ENCODE measurements at regions of chr7 and their contacts with region 1.

Region 1: GRCh38 chr7:108146070-108146837 is 16.1 kb upstream of the LAMB4 start:
- DNase-seq: peak; percentile 62 to 70
- H3K4me3 ChIP-seq: no peak overlapping the region
- H3K27ac ChIP-seq: no peak overlapping the region
- H3K4me1 ChIP-seq: no peaks in the 10 kb centered on the region
- H3K27me3 ChIP-seq: no peaks in the 10 kb centered on the region
- CTCF ChIP-seq: peak; percentile 79 to 93 (median 90)
- POLR2A ChIP-seq: no peak

Region 2: DNA sequence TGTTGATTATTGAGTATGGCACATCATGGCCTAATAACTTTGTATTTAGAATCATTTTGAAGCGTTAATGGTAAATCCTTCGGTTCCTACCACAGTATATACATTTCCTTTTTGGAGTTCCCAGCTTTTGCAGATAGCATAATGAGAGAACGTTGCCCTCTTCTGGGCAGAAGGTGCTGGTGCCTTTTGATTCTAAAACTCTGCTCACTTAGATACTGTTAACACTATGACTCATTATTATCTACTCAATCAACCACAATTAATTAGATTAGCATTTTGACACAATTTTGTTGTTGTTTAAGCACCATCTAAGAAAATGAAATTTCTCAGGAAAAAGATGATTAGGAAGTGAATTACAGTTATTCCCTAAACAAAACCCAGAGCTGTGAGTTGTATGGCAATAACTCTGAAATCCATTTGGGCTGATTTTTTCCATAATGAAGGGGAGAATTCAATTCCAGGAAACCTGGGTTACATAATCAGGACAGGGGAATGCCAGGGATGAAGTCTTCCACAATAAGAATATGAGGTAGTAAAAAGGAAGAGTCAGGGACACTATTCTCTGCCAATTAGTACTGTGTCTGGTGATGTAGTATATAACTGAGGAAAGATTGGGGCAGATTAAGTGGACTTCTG is 266.7 kb before region 1 on chr7:
- intact Hi-C with region 1: loop called (anchors 10 kb)
- DNase-seq: peak; percentile 34 to 39
- H3K4me3 ChIP-seq: no peak overlapping the region
- H3K27ac ChIP-seq: no peak overlapping the region
- H3K4me1 ChIP-seq: no peaks in the 10 kb centered on the region
- H3K27me3 ChIP-seq: no peaks in the 10 kb centered on the region
- CTCF ChIP-seq: peak in 5 of 6 experiments; percentile 32 to 77 (median 72)
- POLR2A ChIP-seq: no peak

Region 3: GRCh38 chr7:107982918-107983389 is 163.3 kb before region 1 on chr7:
- intact Hi-C with region 1: loop called (anchors 10 kb)
- DNase-seq: peak in 1 of 2 donors; percentile 30
- H3K4me3 ChIP-seq: no peak overlapping the region
- H3K27ac ChIP-seq: peak overlapping the region in 1 of 3 donors; percentile 29
- H3K4me1 ChIP-seq: peaks cover 0 to 5% of the 10 kb centered on the region in 2 donors
- H3K27me3 ChIP-seq: no peaks in the 10 kb centered on the region
- CTCF ChIP-seq: peak in 2 of 6 experiments; percentile 14 to 23
- POLR2A ChIP-seq: no peak

Region 4: GRCh38 chr7:108503112-108504026 is 357.1 kb after region 1 on chr7:
- intact Hi-C with region 1: no loop called
- DNase-seq: no peak
- H3K4me3 ChIP-seq: no peak overlapping the region
- H3K27ac ChIP-seq: peak overlapping the region in 2 of 3 donors; percentile 12 to 32
- H3K4me1 ChIP-seq: peaks cover 0 to 8% of the 10 kb centered on the region in 2 donors
- H3K27me3 ChIP-seq: no peaks in the 10 kb centered on the region
- CTCF ChIP-seq: no peak
- POLR2A ChIP-seq: no peak

Region 5: GRCh38 chr7:108598153-108598552 is 451.9 kb after region 1 on chr7:
- intact Hi-C with region 1: no loop called
- DNase-seq: peak in 1 of 2 donors; percentile 13
- H3K4me3 ChIP-seq: no peak overlapping the region
- H3K27ac ChIP-seq: no peak overlapping the region
- H3K4me1 ChIP-seq: no peaks in the 10 kb centered on the region
- H3K27me3 ChIP-seq: no peaks in the 10 kb centered on the region
- CTCF ChIP-seq: no peak
- POLR2A ChIP-seq: no peak

Measured in thyroid gland (tissue), 4 donors.